Activated B cell treated with CpG ODN at 0.5 μM for 24 hours (primary cell): ENCODE measurements at regions of chr4 and their contacts with region 1.

Region 1: DNA sequence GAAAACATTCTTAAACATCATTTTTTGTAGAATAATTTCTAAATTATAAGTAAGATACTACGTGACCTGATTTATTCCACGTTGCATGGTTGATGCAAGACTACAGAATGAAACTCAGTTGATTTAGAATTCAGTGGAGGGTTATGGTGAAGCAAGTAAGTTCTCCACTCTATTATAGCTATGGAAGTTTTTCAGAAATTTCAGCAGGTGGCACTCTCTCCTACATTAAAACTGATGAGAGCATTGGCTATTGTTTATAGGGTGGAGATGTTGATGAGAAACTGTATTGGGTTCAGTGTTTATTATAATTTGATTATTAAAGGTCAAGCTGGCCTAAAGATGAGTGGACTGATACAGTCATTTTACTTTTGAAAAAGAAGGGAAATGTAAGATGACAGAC is 88.0 kb downstream of the FNIP2 start:
- DNase-seq: no peak
- ATAC-seq: peak; percentile 72
- H3K4me3 Mint-ChIP-seq: no peak overlapping the region
- H3K27ac Mint-ChIP-seq: no peak overlapping the region
- H3K4me1 Mint-ChIP-seq: peaks cover 3% of the 10 kb centered on the region
- H3K27me3 Mint-ChIP-seq: peaks cover 20% of the 10 kb centered on the region
- CTCF ChIP-seq: peak; percentile 66

Region 2: DNA sequence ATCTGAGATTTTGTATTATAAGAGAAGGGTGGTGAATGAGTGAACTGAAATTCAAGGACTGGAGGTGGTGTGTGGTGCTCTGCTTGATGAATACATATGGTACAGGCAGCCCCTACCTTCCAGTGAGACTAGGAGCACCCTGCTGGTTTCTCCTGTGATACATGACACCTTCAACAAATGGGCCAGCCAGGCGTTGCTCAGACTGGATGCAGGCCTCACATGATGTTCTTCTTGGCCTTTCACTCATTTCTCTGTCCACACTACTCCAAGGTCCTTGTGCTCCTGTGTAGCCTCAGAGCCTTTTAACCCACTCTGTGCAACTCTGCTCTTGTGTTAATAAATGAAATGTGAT is 20.9 kb before region 1 on chr4:
- CTCF ChIA-PET with region 1: no interaction called
- POLR2A ChIA-PET with region 1: no interaction called
- intact Hi-C with region 1: no loop called
- DNase-seq: no peak
- ATAC-seq: no peak
- H3K4me3 Mint-ChIP-seq: no peak overlapping the region
- H3K27ac Mint-ChIP-seq: no peak overlapping the region
- H3K4me1 Mint-ChIP-seq: no peaks in the 10 kb centered on the region
- H3K27me3 Mint-ChIP-seq: peaks cover 41% of the 10 kb centered on the region
- CTCF ChIP-seq: no peak

Region 3: DNA sequence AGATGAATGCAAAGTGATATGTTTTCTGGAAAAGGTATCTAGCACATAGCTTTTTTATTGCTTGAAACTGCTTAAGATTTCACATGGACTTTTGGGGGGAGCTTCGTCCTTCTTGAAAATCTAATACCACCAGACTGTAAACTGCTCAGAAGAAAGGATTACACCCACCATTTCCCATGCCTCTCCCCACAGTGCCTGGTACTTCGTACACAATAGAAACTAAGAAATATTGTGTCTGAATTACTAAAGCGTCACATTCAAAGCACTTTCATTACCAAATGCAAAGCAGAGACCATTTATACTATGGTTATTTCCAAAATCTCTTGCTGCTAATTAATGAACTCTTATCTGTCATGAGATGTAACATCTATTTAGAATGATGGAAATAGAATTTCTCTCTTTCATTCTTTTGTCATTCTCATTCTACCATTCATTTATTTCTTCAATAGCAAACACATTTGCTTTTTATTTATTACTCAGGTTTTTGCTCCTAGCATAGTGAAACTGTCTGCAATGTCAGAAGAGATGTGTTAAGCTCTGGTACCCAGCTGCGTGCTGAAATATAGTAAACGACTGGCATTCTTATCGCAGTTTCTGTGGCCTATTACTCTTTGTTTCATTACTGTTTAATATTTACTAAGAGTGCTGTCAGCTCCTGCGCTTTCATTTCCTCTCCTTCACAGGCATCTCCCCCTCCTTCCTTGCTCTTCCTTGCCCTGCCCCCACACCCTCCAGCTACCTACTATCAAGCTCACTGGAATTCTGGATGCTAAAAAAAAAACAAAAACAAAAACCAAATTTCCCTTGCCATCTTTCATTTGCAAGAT is 194.6 kb after region 1 on chr4:
- CTCF ChIA-PET with region 1: no interaction called
- POLR2A ChIA-PET with region 1: no interaction called
- intact Hi-C with region 1: loop called (anchors 5 kb)
- DNase-seq: no peak
- ATAC-seq: peak; percentile 51
- H3K4me3 Mint-ChIP-seq: peak overlapping the region; percentile 56
- H3K27ac Mint-ChIP-seq: peak overlapping the region; percentile 63
- H3K4me1 Mint-ChIP-seq: peaks cover 19% of the 10 kb centered on the region
- H3K27me3 Mint-ChIP-seq: peaks cover 40% of the 10 kb centered on the region
- CTCF ChIP-seq: no peak

Region 4: DNA sequence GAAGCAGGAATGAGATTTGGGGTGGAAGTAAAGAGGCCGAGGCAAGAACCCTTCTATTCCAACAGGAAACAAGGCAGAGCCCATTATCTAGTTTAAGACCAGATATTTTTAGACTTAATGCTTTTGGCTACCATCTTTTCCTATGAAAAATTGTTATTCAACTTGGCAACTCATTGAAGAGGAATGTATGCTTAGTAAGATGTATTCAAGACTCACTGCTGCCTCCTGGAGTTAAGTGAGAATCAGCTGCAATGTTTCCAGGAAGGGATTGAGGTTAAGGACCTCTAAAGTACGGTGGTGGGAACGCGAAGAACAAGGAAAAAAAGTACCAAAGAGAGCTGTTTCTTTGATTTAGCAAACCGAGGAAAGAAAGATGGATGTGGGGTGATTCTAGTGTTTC is 335.1 kb after region 1 on chr4:
- CTCF ChIA-PET with region 1: interaction called, 12 read pairs
- POLR2A ChIA-PET with region 1: no interaction called
- intact Hi-C with region 1: no loop called
- DNase-seq: no peak
- ATAC-seq: no peak
- H3K4me3 Mint-ChIP-seq: no peak overlapping the region
- H3K27ac Mint-ChIP-seq: no peak overlapping the region
- H3K4me1 Mint-ChIP-seq: no peaks in the 10 kb centered on the region
- H3K27me3 Mint-ChIP-seq: no peaks in the 10 kb centered on the region
- CTCF ChIP-seq: no peak

Region 5: DNA sequence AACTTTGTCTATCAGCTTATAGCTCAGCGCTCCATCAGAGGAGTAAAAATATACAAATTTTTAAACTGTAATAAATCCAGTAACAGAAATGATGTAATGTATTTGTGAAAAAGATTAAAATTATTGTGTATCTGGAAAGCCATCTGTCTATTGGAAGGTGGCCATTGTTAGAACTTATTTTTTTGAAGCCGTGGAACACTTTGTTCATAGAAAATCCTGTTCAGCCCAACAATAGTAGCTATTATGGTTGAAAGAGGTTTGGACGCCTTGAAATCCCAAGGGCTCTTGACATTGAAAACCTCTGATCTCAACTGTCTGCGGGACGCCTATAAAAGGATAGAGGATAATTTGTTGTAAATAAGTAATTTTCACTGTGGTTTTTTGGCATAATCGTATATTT is 344.3 kb after region 1 on chr4:
- CTCF ChIA-PET with region 1: interaction called, 67 read pairs
- POLR2A ChIA-PET with region 1: no interaction called
- intact Hi-C with region 1: loop called (anchors 1 kb)
- DNase-seq: no peak
- ATAC-seq: no peak
- H3K4me3 Mint-ChIP-seq: no peak overlapping the region
- H3K27ac Mint-ChIP-seq: no peak overlapping the region
- H3K4me1 Mint-ChIP-seq: peaks cover 18% of the 10 kb centered on the region
- H3K27me3 Mint-ChIP-seq: no peaks in the 10 kb centered on the region
- CTCF ChIP-seq: no peak